PC-3 (cell line): ENCODE measurements at regions of chr19 and their contacts with region 1.

Region 1: GRCh38 chr19:17511724-17512573 is 500 bp downstream of the PGLS start:
- DNase-seq: peak; percentile 60
- ATAC-seq: peak; percentile 33
- H3K4me3 ChIP-seq: peak overlapping the region; percentile 91
- H3K27ac ChIP-seq: peak overlapping the region; percentile 79
- H3K4me1 ChIP-seq: peaks cover 22% of the 10 kb centered on the region
- H3K27me3 ChIP-seq: no peaks in the 10 kb centered on the region
- CTCF ChIP-seq: peak; percentile 27; the same call in 1 of the 2 replicates

Region 2: DNA sequence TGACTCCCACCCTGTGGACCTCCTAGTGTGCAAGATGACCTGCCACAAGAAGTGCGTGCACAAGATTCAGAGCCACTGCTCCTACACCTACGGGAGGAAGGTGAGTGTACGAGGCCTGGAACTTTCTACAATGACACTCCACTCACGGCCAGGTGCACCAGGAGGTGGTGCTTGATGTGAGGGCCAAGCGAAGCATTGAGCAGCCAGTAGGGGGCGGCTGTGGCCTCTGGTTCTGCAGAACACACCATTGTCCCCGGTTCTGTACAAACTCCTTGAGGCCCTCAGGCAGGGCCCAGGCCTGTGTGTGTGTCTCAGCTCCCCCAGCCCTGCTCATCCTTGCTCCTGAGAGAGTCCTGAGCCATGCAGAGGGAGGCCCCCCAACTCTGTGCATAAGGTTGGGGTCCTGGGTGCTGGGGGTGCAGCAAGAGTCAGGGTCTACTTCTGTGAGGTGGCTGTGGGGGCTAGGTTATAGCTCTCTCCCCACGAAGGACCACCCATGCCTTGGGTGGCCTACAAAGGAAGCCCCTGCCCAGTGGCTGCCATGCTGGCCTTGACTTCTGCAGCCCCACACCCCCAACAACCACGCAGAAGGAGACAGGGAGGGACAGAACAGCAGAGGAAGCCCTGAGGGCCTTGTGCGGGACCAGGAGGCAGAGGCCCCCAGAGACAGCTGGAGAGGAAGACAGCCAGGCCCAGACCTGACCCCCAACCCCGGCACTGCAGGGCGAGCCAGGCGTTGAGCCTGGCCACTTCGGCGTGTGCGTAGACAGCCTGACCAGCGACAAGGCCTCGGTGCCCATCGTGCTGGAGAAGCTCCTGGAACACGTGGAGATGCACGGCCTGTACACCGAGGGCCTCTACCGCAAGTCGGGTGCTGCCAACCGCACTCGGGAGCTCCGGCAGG is 306.5 kb before region 1 on chr19:
- CTCF ChIA-PET with region 1: no interaction called
- POLR2A ChIA-PET with region 1: no interaction called
- intact Hi-C with region 1: no loop called
- DNase-seq: peak; percentile 64
- ATAC-seq: peak; percentile 61
- H3K4me3 ChIP-seq: no peak overlapping the region
- H3K27ac ChIP-seq: no peak overlapping the region
- H3K4me1 ChIP-seq: 0 out of 2 replicates have a peak, but pooled peaks cover 6% of the 10 kb centered on the region
- H3K27me3 ChIP-seq: no peaks in the 10 kb centered on the region
- CTCF ChIP-seq: peak; percentile 84

Region 3: GRCh38 chr19:17429641-17430113 is 82.3 kb before region 1 on chr19:
- CTCF ChIA-PET with region 1: no interaction called
- POLR2A ChIA-PET with region 1: no interaction called
- intact Hi-C with region 1: no loop called
- DNase-seq: no peak
- ATAC-seq: 0 out of 2 replicates have a peak, but pooled peaks have one; percentile 13
- H3K4me3 ChIP-seq: no peak overlapping the region
- H3K27ac ChIP-seq: no peak overlapping the region
- H3K4me1 ChIP-seq: no peaks in the 10 kb centered on the region
- H3K27me3 ChIP-seq: no peaks in the 10 kb centered on the region
- CTCF ChIP-seq: no peak

Region 4: GRCh38 chr19:17475541-17476115 is 36.3 kb before region 1 on chr19:
- CTCF ChIA-PET with region 1: no interaction called
- POLR2A ChIA-PET with region 1: no interaction called
- intact Hi-C with region 1: no loop called
- DNase-seq: peak; percentile 65
- ATAC-seq: peak; percentile 72
- H3K4me3 ChIP-seq: no peak overlapping the region
- H3K27ac ChIP-seq: peak overlapping the region; percentile 44
- H3K4me1 ChIP-seq: peaks cover 15% of the 10 kb centered on the region
- H3K27me3 ChIP-seq: no peaks in the 10 kb centered on the region
- CTCF ChIP-seq: no peak

Region 5: DNA sequence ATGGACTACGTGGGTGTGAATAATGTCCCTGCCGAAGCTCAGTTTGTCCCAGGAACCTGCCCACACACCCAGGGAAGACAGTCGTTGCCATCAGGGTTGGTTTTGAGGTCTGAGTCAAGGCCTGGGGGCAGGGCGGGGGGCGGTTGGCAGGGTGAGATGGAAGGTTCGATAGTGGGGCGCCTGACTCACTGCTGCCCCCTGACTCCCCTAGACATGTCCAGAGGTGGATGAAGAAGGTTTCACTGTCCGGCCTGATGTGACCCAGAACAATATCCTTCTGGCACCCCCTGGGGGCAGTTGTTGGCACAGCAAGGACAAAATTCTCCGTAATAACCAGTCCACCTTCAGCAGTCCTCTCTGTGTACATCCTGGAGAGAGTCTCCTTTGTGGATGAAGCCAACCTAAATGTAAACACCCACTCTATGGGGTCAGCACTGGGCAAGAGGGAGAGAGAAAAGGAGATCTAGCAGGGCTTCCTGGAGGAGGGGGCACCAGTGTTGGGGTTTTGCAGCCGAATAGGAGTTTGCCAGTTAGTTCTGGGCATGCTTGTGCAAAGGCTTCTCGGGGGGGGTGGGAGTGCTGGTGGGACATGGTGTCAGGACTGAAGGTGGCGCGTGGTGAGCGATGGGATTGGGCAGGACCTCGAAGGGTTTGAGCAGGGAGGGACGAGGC is 263.4 kb after region 1 on chr19:
- CTCF ChIA-PET with region 1: no interaction called
- POLR2A ChIA-PET with region 1: no interaction called
- intact Hi-C with region 1: loop called (anchors 5 kb)
- DNase-seq: peak; percentile 74
- ATAC-seq: peak; percentile 4; the same call in 1 of the 2 replicates
- H3K4me3 ChIP-seq: no peak overlapping the region
- H3K27ac ChIP-seq: no peak overlapping the region
- H3K4me1 ChIP-seq: peaks cover 23% of the 10 kb centered on the region
- H3K27me3 ChIP-seq: no peaks in the 10 kb centered on the region
- CTCF ChIP-seq: peak; percentile 86

Region 6: DNA sequence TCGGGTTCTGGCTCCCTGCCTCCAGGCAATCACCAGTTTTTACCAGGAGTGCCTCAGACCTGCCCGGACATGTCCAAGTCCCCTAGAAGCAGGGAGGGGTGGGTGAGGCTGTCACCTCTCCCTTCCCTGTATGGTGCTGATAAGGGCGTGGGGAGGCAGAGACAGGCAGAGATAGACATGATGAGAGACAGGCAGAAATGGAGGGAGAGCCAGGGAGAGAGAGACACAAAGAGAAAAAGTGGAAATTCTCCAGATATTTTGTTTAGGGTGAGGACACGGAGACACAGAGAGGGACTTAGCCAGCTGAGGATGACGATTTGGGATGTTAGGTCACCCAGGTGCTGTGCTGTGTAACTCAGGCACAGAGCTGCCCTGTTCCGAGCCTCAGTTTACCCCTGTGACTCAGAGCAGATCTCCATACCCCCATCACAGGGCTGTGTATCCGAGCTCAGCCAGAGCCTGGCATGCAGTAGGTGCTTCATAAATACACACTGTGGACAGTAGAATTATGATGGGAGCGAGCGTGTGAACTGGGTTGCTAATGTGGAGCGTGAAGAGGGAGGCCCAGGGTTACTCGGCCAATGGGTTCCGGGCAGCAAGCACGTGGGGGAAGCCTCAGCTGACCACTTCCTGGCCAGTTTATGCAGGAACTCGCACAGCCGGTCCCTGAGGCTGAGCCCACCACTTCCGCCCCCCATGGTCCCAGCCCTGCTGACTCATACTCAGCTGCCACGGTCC is 862.1 kb after region 1 on chr19:
- CTCF ChIA-PET with region 1: no interaction called
- POLR2A ChIA-PET with region 1: interaction called, 18 read pairs
- intact Hi-C with region 1: no loop called
- DNase-seq: peak; percentile 90
- ATAC-seq: peak; percentile 93
- H3K4me3 ChIP-seq: no peak overlapping the region
- H3K27ac ChIP-seq: peak overlapping the region; percentile 76
- H3K4me1 ChIP-seq: peaks cover 38% of the 10 kb centered on the region
- H3K27me3 ChIP-seq: no peaks in the 10 kb centered on the region
- CTCF ChIP-seq: no peak